Heart left ventricle (tissue), 16 donors: ENCODE measurements at regions of chr11 and their contacts with region 1.

Region 1: DNA sequence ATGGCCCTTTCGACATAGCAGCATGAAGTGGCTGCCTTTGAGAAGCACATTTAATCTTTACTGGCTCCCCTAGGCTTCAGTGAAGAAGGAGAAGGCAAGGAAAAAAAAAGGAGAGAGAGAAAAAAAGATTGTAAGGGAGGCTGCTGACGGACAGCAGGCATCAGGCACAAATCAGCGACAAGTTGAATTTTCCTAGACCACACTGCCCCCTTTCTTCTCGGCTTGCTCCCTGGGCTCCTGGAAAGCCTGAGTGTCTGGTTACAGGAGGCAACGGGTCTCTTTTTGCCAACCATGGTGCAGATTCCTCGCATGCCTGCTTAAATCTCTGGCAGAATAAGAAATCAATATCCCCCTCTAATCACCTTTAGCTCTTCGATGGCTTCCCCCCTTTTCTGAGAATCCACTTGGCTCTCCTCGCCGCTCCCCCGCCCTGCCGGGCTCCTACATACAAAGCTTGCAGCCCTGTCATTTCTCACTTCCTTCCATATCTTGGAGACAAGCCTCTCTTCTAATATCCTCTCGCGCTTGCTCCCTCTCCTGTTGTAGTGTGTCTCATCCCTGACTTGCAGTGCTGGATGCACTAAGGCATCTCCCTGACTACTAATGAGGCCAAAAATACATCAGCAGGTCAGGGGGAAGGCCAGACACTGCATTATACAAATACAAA is 14.3 kb downstream of the BLID start:
- DNase-seq: peak; percentile 66 to 76 (median 67)
- ATAC-seq: peak; percentile 82 to 89 (median 88)
- H3K4me3 ChIP-seq: peak overlapping the region; percentile 34 to 81 (median 61)
- H3K27ac ChIP-seq: peak overlapping the region; percentile 70 to 95 (median 89)
- H3K4me1 ChIP-seq: peaks cover 0 to 25% (median 6%) of the 10 kb centered on the region in 12 donors
- H3K27me3 ChIP-seq: peaks cover 0 to 29% (median 4%) of the 10 kb centered on the region in 9 donors
- CTCF ChIP-seq: peak; percentile 35 to 80 (median 61)
- POLR2A ChIP-seq: no peak

Region 2: DNA sequence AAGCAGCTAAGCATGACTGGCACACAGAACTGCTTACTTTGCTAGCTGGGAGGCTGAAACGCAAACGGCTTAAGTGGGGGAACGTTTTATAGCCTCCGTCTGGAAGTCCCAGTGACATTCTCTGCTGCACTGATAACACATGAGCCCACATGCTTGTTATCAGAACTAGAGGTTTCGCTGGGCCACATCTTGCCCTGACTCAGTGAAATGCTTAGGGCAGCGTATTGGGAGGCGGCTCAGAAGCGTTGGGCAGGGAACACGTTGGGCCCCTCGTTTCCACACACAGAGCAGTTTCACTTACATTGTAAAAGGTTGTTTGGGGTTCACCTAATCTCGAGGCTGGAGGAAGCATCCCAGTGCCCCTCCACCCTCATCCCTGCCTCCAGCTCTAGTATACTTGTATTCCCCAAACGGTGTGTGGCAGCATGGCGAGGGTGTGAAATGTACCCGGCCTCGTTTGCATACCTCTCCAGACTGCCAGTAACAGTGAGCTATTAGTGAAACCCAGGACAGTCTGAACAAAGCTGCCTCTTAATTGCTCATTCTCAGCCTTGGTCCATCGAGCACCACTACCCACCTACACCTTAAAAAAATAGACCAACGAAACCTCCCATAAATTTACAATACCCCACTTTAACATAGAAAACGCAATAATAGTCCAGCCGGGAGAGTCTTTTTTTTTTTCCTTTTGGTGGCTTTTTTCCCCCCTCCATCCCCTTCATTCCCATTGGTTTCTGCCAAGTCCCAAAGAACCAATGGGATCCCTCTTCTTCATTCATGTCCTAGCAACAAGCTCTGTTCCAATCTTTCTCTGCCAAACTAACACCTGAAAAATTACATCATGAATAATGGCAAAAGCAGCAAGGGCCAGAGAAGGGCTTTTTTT is 430.2 kb before region 1 on chr11:
- intact Hi-C with region 1: loop called in 1 of 10 experiments (anchors 5 kb)
- DNase-seq: no peak
- ATAC-seq: peak; percentile 46 to 66 (median 56)
- H3K4me3 ChIP-seq: peak overlapping the region in 2 of 12 donors; percentile 16 to 21
- H3K27ac ChIP-seq: peak overlapping the region in 8 of 12 donors; percentile 33 to 79 (median 70)
- H3K4me1 ChIP-seq: peaks cover 0 to 38% (median 13%) of the 10 kb centered on the region in 12 donors
- H3K27me3 ChIP-seq: no peaks in the 10 kb centered on the region
- CTCF ChIP-seq: no peak
- POLR2A ChIP-seq: no peak

Region 3: DNA sequence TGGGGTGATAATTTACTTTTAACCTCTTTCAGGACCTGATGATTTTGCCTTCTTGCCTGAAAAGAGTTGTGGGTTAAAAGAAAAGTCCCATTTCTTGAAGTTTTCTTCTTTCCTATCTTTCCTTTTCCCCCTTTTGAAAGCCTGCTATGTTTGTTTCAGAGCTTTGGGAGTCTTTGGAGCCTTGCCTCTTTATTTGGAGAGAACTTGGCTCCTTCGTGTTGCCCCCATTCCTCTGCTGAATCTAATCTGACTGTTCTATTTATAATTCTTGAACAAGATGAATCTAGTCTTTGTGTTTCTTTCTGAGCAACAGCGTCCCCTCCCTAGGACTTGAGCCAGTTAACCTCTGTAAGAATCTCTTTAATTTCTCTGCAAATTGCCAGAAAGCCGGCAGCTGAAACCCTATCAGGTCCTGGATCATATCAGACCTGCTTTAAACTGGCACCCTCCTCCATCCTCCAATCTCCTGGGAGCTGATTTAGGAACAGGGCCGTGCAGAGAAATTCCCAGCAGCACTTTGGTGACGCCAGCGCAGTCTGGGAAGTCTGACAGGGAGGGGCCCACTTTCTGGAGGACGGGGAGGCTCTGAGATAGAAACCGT is 359.9 kb before region 1 on chr11:
- intact Hi-C with region 1: loop called in 4 of 10 experiments (anchors 5 to 10 kb)
- DNase-seq: peak; percentile 76 to 90 (median 79)
- ATAC-seq: peak; percentile 88 to 97 (median 96)
- H3K4me3 ChIP-seq: peak overlapping the region in 5 of 12 donors; percentile 5 to 19 (median 14)
- H3K27ac ChIP-seq: peak overlapping the region; percentile 68 to 91 (median 84)
- H3K4me1 ChIP-seq: peaks cover 0 to 28% (median 19%) of the 10 kb centered on the region in 12 donors
- H3K27me3 ChIP-seq: no peaks in the 10 kb centered on the region
- CTCF ChIP-seq: peak in 6 of 12 donors; percentile 7 to 27 (median 18)
- POLR2A ChIP-seq: no peak

Region 4: GRCh38 chr11:122038543-122038942 is 63.2 kb before region 1 on chr11:
- intact Hi-C with region 1: loop called in 1 of 10 experiments (anchors 5 kb)
- DNase-seq: no peak
- ATAC-seq: peak in 1 of 4 donors; percentile 36
- H3K4me3 ChIP-seq: no peak overlapping the region
- H3K27ac ChIP-seq: no peak overlapping the region
- H3K4me1 ChIP-seq: peaks cover 0 to 23% (median 11%) of the 10 kb centered on the region in 12 donors
- H3K27me3 ChIP-seq: no peaks in the 10 kb centered on the region
- CTCF ChIP-seq: no peak
- POLR2A ChIP-seq: no peak

Region 5: DNA sequence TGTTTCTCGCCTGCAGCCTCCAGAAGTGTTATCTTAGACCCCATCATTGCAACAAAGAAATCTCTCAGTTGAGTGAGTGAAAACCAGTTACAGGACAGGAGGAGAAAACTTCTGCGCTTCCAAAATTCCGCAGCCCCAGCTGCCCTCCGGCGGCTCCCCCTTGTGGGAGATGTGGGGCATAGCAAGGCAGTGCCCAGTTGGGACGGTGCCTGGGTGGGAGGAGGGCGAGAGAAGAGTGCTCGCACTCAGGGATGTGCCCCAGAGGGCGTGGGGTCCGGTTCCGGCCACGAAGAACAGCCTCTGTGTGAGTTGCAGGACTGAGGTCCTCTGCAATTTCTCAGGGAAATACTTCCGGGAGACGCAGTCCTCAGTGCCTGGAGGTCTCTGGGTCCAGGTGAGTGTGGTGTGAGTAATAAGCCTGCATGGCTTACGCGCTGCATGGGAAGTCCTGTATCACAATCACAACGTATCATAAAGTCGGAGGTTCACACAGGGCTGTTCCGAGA is 101.2 kb after region 1 on chr11:
- intact Hi-C with region 1: loop called (anchors 1 to 10 kb)
- DNase-seq: peak; percentile 63 to 84 (median 66)
- ATAC-seq: peak; percentile 65 to 89 (median 85)
- H3K4me3 ChIP-seq: peak overlapping the region in 10 of 12 donors; percentile 15 to 59 (median 40)
- H3K27ac ChIP-seq: peak overlapping the region in 6 of 12 donors; percentile 32 to 50 (median 44)
- H3K4me1 ChIP-seq: peaks cover 0 to 64% (median 27%) of the 10 kb centered on the region in 12 donors
- H3K27me3 ChIP-seq: no peaks in the 10 kb centered on the region
- CTCF ChIP-seq: peak; percentile 93 to 100 (median 97)
- POLR2A ChIP-seq: no peak